HEK293 (cell line): ENCODE measurements at regions of chr12 and their contacts with region 1.

Region 1: GRCh38 chr12:15276088-15276698 is 46.1 kb upstream of the PTPRO start:
- H3K4me3 ChIP-seq: no peak overlapping the region
- H3K27ac ChIP-seq: no peak overlapping the region
- H3K4me1 ChIP-seq: no peaks in the 10 kb centered on the region
- CTCF ChIP-seq: 0 out of 2 replicates have a peak, but pooled peaks have one; percentile 24

Region 2: GRCh38 chr12:15181017-15181683 is 95.0 kb before region 1 on chr12:
- CTCF ChIA-PET with region 1: no interaction called
- POLR2A ChIA-PET with region 1: no interaction called
- H3K4me3 ChIP-seq: no peak overlapping the region
- H3K27ac ChIP-seq: no peak overlapping the region
- H3K4me1 ChIP-seq: 0 out of 2 replicates have a peak, but pooled peaks cover 2% of the 10 kb centered on the region
- CTCF ChIP-seq: no peak

Region 3: DNA sequence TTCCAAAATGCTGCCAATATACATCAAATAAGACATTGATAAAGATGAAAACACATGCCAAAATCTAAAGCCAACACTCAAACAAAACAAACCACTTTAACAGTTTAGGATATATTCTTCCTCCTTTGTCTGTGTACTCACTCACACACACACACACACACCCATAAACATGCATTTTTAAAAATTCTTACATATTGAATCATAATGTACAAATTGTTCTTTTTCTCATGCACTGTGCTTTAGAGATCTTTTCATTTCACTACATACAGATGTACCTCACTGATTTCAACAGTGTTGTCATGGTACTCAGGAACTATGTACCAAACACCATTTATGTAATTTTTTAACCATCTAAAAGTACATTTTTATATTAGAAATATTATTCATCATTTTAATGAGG is 45.4 kb before region 1 on chr12:
- CTCF ChIA-PET with region 1: interaction called, 10 read pairs
- POLR2A ChIA-PET with region 1: no interaction called
- H3K4me3 ChIP-seq: no peak overlapping the region
- H3K27ac ChIP-seq: no peak overlapping the region
- H3K4me1 ChIP-seq: no peaks in the 10 kb centered on the region
- CTCF ChIP-seq: no peak

Region 4: GRCh38 chr12:15289192-15289591 is 13.0 kb after region 1 on chr12:
- CTCF ChIA-PET with region 1: interaction called, 10 read pairs
- POLR2A ChIA-PET with region 1: no interaction called
- H3K4me3 ChIP-seq: no peak overlapping the region
- H3K27ac ChIP-seq: no peak overlapping the region
- H3K4me1 ChIP-seq: no peaks in the 10 kb centered on the region
- CTCF ChIP-seq: no peak

Region 5: GRCh38 chr12:15522565-15523187 is 246.5 kb after region 1 on chr12:
- CTCF ChIA-PET with region 1: interaction called, 26 read pairs
- POLR2A ChIA-PET with region 1: no interaction called
- H3K4me3 ChIP-seq: no peak overlapping the region
- H3K27ac ChIP-seq: no peak overlapping the region
- H3K4me1 ChIP-seq: no peaks in the 10 kb centered on the region
- CTCF ChIP-seq: 0 out of 2 replicates have a peak, but pooled peaks have one; percentile 38

Region 6: DNA sequence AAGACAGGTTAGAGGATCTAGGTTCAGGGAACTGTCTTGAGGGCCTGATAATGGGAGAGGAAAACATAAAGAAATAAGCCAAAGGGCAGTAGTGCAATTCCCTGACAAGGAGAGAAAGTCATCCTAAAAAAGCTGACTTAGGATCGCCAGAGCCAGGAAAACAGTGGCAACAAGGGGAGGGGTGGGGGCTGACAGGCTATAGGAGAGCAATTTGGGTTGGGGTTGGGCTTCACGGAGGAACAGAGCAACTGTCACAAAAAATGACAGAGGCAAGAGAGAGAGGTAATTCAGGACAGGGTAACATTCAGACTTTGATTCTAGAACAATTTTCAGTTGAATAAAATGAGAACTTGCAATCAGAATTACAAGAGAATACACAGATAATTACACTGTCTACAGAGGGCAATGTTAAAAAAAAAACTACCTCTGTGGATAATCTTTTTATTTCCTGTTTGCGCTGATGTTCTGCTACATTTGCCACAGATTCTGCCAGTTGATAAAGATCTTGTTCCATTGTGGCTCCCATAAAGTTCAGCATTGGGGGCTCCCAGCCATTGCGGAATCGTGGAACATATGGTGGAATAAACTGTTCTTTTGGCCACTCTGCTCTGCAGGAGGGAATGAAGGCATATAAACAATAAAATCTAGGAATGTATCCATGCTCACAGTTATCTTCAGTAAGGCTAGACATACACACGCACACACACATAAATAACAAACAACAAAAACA is 374.4 kb after region 1 on chr12:
- CTCF ChIA-PET with region 1: no interaction called
- POLR2A ChIA-PET with region 1: no interaction called
- H3K4me3 ChIP-seq: no peak overlapping the region
- H3K27ac ChIP-seq: no peak overlapping the region
- H3K4me1 ChIP-seq: no peaks in the 10 kb centered on the region
- CTCF ChIP-seq: no peak